Ovary (tissue), 10 donors: ENCODE measurements at regions of chr9 and their contacts with region 1.

Region 1: GRCh38 chr9:133868203-133868602 is 123.9 kb downstream of the VAV2 start:
- DNase-seq: no peak
- H3K4me3 ChIP-seq: no peak overlapping the region
- H3K27ac ChIP-seq: no peak overlapping the region
- H3K4me1 ChIP-seq: no peaks in the 10 kb centered on the region
- H3K27me3 ChIP-seq: no peaks in the 10 kb centered on the region
- CTCF ChIP-seq: no peak
- EP300 ChIP-seq: no peak
- POLR2A ChIP-seq: no peak

Region 2: DNA sequence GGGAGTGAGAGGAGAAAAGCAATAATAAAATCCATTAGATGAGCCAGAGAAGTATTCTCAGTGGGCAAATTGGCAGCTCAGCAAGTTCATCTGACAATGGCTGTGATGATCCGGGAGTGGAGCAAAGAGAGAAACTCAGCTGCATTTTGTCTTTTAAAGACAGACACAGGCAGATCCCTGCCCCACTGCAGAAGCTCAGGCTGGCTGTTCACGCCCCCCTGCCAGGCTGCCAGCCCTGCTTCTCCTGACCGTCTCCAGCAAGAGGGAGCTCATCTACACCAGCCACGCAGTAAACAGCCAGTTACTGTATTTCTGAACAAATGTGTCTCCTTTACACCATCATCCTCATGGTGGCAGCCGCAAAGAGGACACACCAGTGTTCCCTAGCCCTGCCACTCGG is 15.8 kb before region 1 on chr9:
- intact Hi-C with region 1: loop called in 1 of 4 experiments (anchors 1 kb)
- DNase-seq: no peak
- H3K4me3 ChIP-seq: no peak overlapping the region
- H3K27ac ChIP-seq: no peak overlapping the region
- H3K4me1 ChIP-seq: no peaks in the 10 kb centered on the region
- H3K27me3 ChIP-seq: no peaks in the 10 kb centered on the region
- CTCF ChIP-seq: no peak
- EP300 ChIP-seq: no peak
- POLR2A ChIP-seq: no peak

Region 3: DNA sequence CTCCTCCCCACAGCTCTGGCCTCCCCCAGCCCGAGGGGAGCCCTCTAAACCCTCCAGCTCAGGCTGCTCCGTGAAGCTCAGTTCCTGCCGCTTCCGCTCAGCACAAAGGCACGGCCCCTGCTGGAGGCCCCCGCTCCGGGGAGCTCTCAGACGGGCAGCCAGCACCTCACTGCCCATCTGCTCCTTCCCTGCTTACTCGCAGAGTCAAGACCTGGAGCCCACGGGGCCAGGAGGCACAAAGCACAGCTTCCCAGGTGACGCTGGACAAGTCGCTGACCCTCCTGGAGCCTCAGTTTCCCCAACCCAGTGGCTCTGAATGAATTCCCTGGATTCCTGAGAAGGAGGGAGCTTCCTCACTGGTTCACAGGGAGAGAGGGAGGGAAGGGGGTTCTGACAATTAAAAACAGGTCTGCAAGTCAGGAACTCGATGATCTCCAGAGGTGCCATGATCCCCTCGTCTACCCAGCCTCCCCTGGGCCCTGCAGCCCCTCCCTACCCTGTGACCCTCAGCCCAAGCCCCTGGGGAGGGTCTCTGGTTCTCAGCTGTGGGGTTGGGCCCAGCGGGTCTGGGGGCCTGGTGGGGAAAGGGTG is 87.7 kb after region 1 on chr9:
- intact Hi-C with region 1: no loop called
- DNase-seq: peak; percentile 45 to 60 (median 52)
- H3K4me3 ChIP-seq: peak overlapping the region; percentile 27
- H3K27ac ChIP-seq: peak overlapping the region; percentile 20 to 61
- H3K4me1 ChIP-seq: peaks cover 26% of the 10 kb centered on the region
- H3K27me3 ChIP-seq: no peaks in the 10 kb centered on the region
- CTCF ChIP-seq: no peak
- EP300 ChIP-seq: no peak
- POLR2A ChIP-seq: no peak